Posterior cingulate gyrus (tissue), 11 donors: ENCODE measurements at regions of chr5 and their contacts with region 1.

Region 1: DNA sequence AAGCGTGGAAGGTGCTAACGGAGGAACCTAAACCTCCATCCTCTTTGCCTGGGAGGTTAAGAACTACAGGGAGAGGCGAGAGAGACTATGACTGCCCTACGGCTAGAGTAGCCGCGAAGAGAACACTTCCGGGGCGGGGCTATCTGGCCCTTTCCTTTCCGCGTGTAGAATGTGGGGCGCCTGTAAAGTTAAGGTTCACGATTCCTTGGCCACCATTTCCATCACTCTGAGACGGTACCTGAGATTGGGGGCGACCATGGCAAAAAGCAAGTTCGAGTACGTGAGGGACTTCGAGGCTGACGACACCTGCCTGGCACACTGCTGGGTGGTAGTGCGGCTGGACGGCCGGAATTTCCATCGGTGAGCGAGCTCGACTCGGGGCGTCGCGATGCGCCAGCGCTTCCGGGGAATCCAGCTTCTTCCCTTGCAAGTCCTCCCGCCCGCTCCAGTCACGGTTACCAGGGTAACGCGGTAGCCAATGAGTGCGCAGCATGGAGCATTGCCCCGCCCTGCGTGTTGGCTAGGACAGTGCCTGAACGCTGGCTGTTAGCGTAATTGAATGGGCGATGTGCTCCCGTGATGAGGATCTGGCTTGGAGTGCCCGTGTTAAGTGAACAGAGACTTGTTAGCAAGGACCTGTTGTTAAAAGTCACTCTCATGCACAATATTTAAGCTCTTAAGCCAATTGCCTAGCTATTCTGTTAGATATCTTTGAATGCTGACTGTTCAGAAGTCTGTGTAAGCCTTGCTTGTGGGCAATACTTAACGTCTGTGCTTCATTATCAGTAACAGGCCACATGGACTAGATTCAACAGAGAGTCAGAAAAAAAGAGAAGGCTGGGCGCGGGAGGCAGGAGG is at the start of gene THG1L:
- DNase-seq: peak; percentile 100

Region 2: DNA sequence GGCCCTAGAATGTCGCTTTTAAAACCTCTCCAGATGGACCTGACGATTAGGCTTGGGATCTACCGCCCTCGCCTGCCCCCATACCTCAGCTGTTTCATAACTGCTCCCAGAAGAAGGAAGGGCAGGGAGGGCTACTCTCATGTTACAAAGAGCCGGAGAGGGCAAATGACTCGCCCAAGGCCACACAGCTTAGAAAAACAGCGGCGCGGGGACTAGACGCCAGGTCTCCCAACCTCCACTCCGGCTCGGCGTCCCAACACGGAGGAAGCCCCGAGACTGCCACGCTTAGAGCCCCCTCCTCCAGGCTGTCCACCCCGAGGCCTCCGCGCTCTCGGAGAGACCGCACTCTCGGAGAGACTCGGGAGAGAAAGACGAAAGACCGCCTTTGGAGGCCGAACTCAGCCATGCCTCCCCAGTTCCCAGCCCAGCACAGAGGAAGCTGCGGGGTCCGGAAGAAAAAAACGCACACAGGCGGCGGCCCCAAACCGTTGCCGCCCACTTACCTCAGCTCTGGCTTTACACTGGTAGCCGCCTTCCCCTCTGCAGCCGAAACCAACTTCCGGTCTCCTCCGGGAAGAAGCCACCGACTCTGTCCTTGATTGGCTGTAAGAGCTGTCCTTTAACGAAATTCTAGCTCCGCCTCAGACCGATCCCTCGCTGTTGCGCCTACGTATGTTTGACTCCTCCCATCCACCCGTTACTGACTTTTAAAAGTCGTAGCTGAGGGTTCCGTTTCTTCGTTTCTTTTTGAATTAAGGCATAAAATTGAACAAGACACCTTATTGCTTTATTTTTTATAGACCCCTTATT is 589.0 kb before region 1 on chr5 and contains the start of gene MED7:
- intact Hi-C with region 1: loop called (anchors 10 kb)
- DNase-seq: peak; percentile 86 to 99 (median 92)